ENCODE measurements at regions of chr6 and their contacts with region 1.

Region 1: DNA sequence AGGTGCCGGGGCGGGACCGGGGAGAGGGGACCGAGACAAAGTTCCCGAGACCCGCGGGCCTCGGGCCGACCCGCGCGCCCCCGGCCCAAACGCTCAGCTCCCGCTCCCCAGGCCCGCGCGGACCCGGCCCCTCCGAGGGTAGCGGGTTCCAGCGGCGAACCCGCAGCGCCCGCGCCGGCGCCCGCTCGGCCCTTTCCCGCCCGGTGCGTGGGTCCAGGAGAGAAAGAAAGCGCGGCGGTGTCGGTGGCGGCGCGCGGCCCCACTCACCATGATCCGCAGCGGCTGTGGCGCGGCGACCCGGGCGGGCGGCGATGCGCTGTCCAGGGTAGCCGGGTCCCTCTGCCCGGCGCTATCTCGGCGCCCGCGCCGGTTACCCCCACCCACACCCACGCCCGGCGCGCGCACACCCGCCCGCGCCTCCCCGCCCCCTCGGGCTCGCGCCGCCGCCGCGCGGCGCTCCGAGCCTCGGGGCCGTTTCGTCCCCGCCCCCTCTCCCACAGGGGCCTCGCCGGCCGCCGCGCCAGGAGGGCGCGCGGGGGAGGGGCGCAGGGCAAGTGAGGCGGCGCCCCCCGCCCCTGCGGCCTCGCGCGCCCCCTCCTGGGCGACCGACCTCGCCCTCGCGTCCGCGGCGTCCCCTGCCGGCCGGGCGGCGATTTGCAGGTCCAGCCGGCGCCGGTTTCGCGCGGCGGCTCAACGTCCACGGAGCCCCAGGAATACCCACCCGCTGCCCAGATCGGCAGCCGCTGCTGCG is at the start of gene ELOVL2:
- DNase-seq: peak; percentile 59
- ATAC-seq: peak; percentile 84
- H3K4me3 ChIP-seq: peak within 1 kb of the TSS; percentile 86 to 99 (median 90)
- H3K27ac ChIP-seq: peak within 1 kb of the TSS; percentile 67
- H3K4me1 ChIP-seq: peaks cover 40% of the 10 kb centered on the region
- H3K27me3 ChIP-seq: no peaks in the 10 kb centered on the region; a peak in 1 of 5 replicates
- CTCF ChIP-seq: peak; percentile 90
- EP300 ChIP-seq: peak; percentile 49 to 59; a peak in 2 of 4 replicates
- POLR2A ChIP-seq: no peak
- RAD21 ChIP-seq: peak; percentile 100
- total RNA-seq, gene ELOVL2: 60.1 and 65.4 TPM in 2 replicates

Region 2: GRCh38 chr6:10999994-11000393 is 44.1 kb before region 1 on chr6:
- CTCF ChIA-PET with region 1: interaction called, 9 read pairs
- POLR2A ChIA-PET with region 1: no interaction called
- in situ Hi-C with region 1: no loop called
- intact Hi-C with region 1: loop called (anchors 10 kb)
- DNase-seq: no peak
- ATAC-seq: no peak
- H3K4me3 ChIP-seq: no peak overlapping the region
- H3K27ac ChIP-seq: no peak overlapping the region
- H3K4me1 ChIP-seq: peaks cover 26% of the 10 kb centered on the region
- H3K27me3 ChIP-seq: no peaks in the 10 kb centered on the region
- CTCF ChIP-seq: no peak
- EP300 ChIP-seq: no peak
- POLR2A ChIP-seq: no peak
- RAD21 ChIP-seq: no peak

Region 3: GRCh38 chr6:11009353-11009752 is 34.8 kb before region 1 on chr6:
- CTCF ChIA-PET with region 1: interaction called, 27 read pairs
- POLR2A ChIA-PET with region 1: interaction called, 52 read pairs
- in situ Hi-C with region 1: no loop called
- intact Hi-C with region 1: loop called (anchors 1 kb)
- DNase-seq: peak; percentile 65
- ATAC-seq: no peak
- H3K4me3 ChIP-seq: no peak overlapping the region
- H3K27ac ChIP-seq: peak overlapping the region; percentile 67
- H3K4me1 ChIP-seq: peaks cover 97% of the 10 kb centered on the region
- H3K27me3 ChIP-seq: no peaks in the 10 kb centered on the region
- CTCF ChIP-seq: no peak
- EP300 ChIP-seq: peak in 1 of 2 experiments; percentile 57; a peak in 2 of 4 replicates
- POLR2A ChIP-seq: 0 out of 4 replicates have a peak, but pooled peaks of 1 of the 2 experiments have one; percentile 31
- RAD21 ChIP-seq: no peak

Region 4: GRCh38 chr6:11076540-11076939 is 32.4 kb after region 1 on chr6:
- CTCF ChIA-PET with region 1: no interaction called
- POLR2A ChIA-PET with region 1: no interaction called
- in situ Hi-C with region 1: no loop called
- intact Hi-C with region 1: no loop called
- DNase-seq: no peak
- ATAC-seq: no peak
- H3K4me3 ChIP-seq: no peak overlapping the region
- H3K27ac ChIP-seq: no peak overlapping the region
- H3K4me1 ChIP-seq: peaks cover 12% of the 10 kb centered on the region
- H3K27me3 ChIP-seq: no peaks in the 10 kb centered on the region; a peak in 1 of 5 replicates
- CTCF ChIP-seq: no peak
- EP300 ChIP-seq: no peak
- POLR2A ChIP-seq: no peak
- RAD21 ChIP-seq: no peak